CD8-positive, alpha-beta T cell (primary cell): ENCODE measurements at regions of chr20 and their contacts with region 1.

Region 1: DNA sequence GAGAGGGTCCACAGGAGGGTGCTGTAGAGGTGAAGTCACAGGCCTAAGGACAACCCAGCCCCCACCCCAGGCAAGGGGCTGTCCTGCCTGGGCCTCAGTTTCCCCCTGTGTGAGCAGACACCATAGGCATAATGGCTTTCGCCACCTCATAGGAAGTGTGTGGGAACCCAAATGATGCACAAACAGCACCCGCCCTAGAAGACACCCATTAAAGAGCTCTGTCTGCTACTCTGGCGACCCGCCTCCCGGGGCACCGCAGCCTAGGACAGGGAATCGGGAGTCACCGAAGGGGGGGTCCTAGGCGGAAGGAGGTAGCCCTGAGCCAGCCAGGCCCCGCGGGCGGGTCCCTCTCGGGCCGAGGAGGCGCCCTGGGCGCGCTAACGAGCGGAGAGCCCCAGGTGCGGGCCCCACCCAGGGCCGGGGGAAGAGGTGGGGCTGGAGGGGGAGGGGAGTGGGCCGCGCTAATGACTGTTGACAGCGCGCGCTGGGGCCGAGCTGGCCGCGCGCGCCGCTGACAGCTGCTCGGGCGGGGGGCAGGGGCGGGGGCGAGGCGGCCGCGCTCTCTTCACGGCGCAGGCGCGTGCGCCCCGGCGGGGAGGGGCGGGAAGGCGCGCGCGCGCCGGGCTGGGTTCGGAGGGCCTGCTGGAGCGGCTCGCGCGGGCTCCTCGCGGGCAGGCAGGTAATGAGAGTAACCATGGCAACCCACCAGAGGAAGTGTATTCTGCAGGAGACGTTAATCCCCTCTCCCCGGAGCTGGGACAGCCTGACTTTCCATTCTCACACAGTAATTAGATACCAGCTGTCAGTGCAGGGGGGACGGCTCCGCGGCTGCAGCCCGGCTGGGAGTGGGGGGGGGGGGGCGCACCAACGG is 48.9 kb downstream of the NOL4L start:
- DNase-seq: peak; percentile 66 to 93 (median 79)
- ATAC-seq: peak; percentile 34
- H3K4me3 ChIP-seq: peak overlapping the region; percentile 33 to 49
- H3K4me3 Mint-ChIP-seq: peak overlapping the region; percentile 82
- H3K27ac ChIP-seq: peak overlapping the region; percentile 52 to 88
- H3K27ac Mint-ChIP-seq: peak overlapping the region; percentile 97
- H3K4me1 ChIP-seq: peaks cover 87% of the 10 kb centered on the region
- H3K4me1 Mint-ChIP-seq: peaks cover 87% of the 10 kb centered on the region
- H3K27me3 ChIP-seq: no peaks in the 10 kb centered on the region
- H3K27me3 Mint-ChIP-seq: no peaks in the 10 kb centered on the region
- CTCF ChIP-seq: no peak

Region 2: DNA sequence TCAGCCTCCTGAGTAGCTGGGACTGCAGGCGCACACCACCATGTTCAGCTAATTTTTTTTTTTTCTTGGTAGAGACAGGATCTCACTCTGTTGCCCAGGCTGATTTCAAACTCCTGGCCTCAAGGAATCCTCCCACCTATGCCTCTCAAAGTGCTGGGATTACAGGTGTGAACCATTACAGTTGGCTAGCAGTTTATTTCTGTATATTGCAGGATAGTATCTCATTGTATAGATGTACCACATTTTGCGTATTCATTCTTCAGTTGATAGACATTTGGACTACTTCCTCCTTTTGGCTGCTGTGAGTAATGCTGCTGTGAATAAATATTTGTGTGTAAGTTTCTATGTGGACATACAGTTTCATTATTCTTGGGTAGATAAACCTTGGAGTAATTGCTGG is 145.2 kb before region 1 on chr20:
- CTCF ChIA-PET with region 1: no interaction called
- POLR2A ChIA-PET with region 1: no interaction called
- intact Hi-C with region 1: no loop called
- DNase-seq: no peak
- ATAC-seq: no peak
- H3K4me3 ChIP-seq: no peak overlapping the region
- H3K4me3 Mint-ChIP-seq: no peak overlapping the region
- H3K27ac ChIP-seq: no peak overlapping the region
- H3K27ac Mint-ChIP-seq: peak overlapping the region; percentile 18
- H3K4me1 ChIP-seq: peaks cover 19% of the 10 kb centered on the region
- H3K4me1 Mint-ChIP-seq: peaks cover 52% of the 10 kb centered on the region
- H3K27me3 ChIP-seq: no peaks in the 10 kb centered on the region
- H3K27me3 Mint-ChIP-seq: no peaks in the 10 kb centered on the region
- CTCF ChIP-seq: no peak

Region 3: GRCh38 chr20:32484958-32485769 is 51.0 kb before region 1 on chr20:
- CTCF ChIA-PET with region 1: interaction called, 3 read pairs
- POLR2A ChIA-PET with region 1: interaction called, 3 read pairs
- intact Hi-C with region 1: loop called (anchors 1 to 2 kb)
- DNase-seq: peak; percentile 72 to 92 (median 86)
- ATAC-seq: peak; percentile 82
- H3K4me3 ChIP-seq: peak overlapping the region; percentile 67 to 77
- H3K4me3 Mint-ChIP-seq: peak overlapping the region; percentile 91
- H3K27ac ChIP-seq: peak overlapping the region; percentile 46 to 62
- H3K27ac Mint-ChIP-seq: peak overlapping the region; percentile 94
- H3K4me1 ChIP-seq: peaks cover 36% of the 10 kb centered on the region
- H3K4me1 Mint-ChIP-seq: peaks cover 46% of the 10 kb centered on the region
- H3K27me3 ChIP-seq: no peaks in the 10 kb centered on the region
- H3K27me3 Mint-ChIP-seq: no peaks in the 10 kb centered on the region
- CTCF ChIP-seq: peak; percentile 88

Region 4: DNA sequence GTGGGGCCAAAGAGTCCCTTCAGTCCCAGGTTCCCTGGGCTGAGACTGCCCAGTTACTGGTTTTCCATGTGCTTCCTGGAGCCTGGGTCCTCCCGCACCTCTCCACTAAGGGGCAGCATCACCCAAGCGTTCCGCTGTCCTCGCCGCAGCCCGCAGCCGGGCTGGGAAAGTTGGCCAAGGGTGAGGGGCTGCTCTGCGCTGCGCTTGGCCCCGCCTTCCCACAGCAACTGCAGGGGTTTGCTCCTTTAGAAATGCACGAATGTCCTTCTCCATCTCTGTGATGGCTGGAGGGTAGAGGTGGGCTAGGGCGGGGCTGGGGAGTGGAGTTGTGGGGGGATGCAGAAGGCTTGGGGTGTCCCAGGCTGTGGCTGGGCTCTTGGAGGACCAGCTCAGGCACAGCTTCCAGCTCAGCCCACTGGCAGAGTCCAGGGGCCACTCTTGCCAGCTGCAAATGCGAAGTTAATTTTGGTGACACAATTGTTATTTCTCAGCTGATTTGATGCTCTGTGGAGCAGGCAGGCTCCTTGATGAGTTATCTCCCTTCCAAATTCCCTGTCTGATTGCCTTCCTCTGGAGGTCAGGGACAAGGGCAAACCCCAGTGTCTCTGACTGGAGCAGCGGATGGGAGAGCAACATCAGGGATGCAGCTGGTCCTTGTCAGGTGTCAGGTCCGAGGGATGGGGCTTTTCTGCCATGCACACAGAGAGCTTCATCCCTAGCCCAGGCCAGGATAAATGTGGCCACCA is 14.2 kb before region 1 on chr20:
- CTCF ChIA-PET with region 1: interaction called, 235 read pairs
- POLR2A ChIA-PET with region 1: interaction called, 187 read pairs
- intact Hi-C with region 1: loop called (anchors 1 kb)
- DNase-seq: peak in 8 of 9 experiments; percentile 55 to 83 (median 74)
- ATAC-seq: peak; percentile 78
- H3K4me3 ChIP-seq: no peak overlapping the region
- H3K4me3 Mint-ChIP-seq: peak overlapping the region; percentile 54
- H3K27ac ChIP-seq: peak overlapping the region in 1 of 2 experiments; percentile 52
- H3K27ac Mint-ChIP-seq: peak overlapping the region; percentile 92
- H3K4me1 ChIP-seq: peaks cover 66% of the 10 kb centered on the region
- H3K4me1 Mint-ChIP-seq: peaks cover 66% of the 10 kb centered on the region
- H3K27me3 ChIP-seq: no peaks in the 10 kb centered on the region
- H3K27me3 Mint-ChIP-seq: no peaks in the 10 kb centered on the region
- CTCF ChIP-seq: peak; percentile 79

Region 5: GRCh38 chr20:32567384-32568178 is 31.4 kb after region 1 on chr20:
- CTCF ChIA-PET with region 1: interaction called, 3 read pairs
- POLR2A ChIA-PET with region 1: interaction called, 7 read pairs
- intact Hi-C with region 1: loop called in 1 of 2 experiments (anchors 2 kb)
- DNase-seq: no peak
- ATAC-seq: no peak
- H3K4me3 ChIP-seq: no peak overlapping the region
- H3K4me3 Mint-ChIP-seq: no peak overlapping the region
- H3K27ac ChIP-seq: peak overlapping the region in 1 of 2 experiments; percentile 76
- H3K27ac Mint-ChIP-seq: no peak overlapping the region
- H3K4me1 ChIP-seq: peaks cover 75% of the 10 kb centered on the region
- H3K4me1 Mint-ChIP-seq: peaks cover 32% of the 10 kb centered on the region
- H3K27me3 ChIP-seq: no peaks in the 10 kb centered on the region
- H3K27me3 Mint-ChIP-seq: no peaks in the 10 kb centered on the region
- CTCF ChIP-seq: no peak

Region 6: GRCh38 chr20:32681175-32682084 is 145.2 kb after region 1 on chr20:
- CTCF ChIA-PET with region 1: no interaction called
- POLR2A ChIA-PET with region 1: no interaction called
- intact Hi-C with region 1: no loop called
- DNase-seq: no peak
- ATAC-seq: no peak
- H3K4me3 ChIP-seq: no peak overlapping the region
- H3K4me3 Mint-ChIP-seq: no peak overlapping the region
- H3K27ac ChIP-seq: no peak overlapping the region
- H3K27ac Mint-ChIP-seq: no peak overlapping the region
- H3K4me1 ChIP-seq: no peaks in the 10 kb centered on the region
- H3K4me1 Mint-ChIP-seq: peaks cover 11% of the 10 kb centered on the region
- H3K27me3 ChIP-seq: no peaks in the 10 kb centered on the region
- H3K27me3 Mint-ChIP-seq: no peaks in the 10 kb centered on the region
- CTCF ChIP-seq: no peak

Region 7: GRCh38 chr20:32966881-32967781 is 430.9 kb after region 1 on chr20:
- CTCF ChIA-PET with region 1: no interaction called
- POLR2A ChIA-PET with region 1: no interaction called
- intact Hi-C with region 1: loop called in 1 of 2 experiments (anchors 5 kb)
- DNase-seq: peak in 8 of 9 experiments; percentile 22 to 91 (median 67)
- ATAC-seq: peak; percentile 41
- H3K4me3 ChIP-seq: peak overlapping the region in 1 of 2 experiments; percentile 21
- H3K4me3 Mint-ChIP-seq: peak overlapping the region; percentile 73
- H3K27ac ChIP-seq: peak overlapping the region; percentile 73 to 95
- H3K27ac Mint-ChIP-seq: no peak overlapping the region
- H3K4me1 ChIP-seq: peaks cover 81% of the 10 kb centered on the region
- H3K4me1 Mint-ChIP-seq: peaks cover 79% of the 10 kb centered on the region
- H3K27me3 ChIP-seq: no peaks in the 10 kb centered on the region
- H3K27me3 Mint-ChIP-seq: no peaks in the 10 kb centered on the region
- CTCF ChIP-seq: no peak